ENCODE measurements at regions of chrX and their contacts with region 1.

Region 1: DNA sequence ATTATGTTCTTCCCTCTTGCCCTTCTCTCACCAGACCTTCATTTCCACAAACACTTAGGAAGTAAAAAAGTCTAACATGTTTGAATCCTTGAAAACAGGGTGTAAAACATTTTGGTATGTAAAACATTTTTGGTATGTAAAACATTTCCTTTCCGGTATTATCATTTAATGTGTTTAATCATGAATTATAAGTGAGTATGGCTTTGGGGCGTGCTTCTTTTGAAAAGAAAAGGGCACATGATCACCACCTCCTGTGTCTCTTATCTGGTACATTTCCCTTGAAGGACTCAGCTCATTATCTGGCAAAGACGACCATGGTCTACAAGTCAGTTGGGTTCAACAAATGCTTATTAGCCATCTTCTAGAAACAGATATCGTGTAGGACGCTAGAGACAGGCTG is 283.6 kb downstream of the FRMPD4 start:
- DNase-seq: no peak
- H3K4me3 ChIP-seq: no peak overlapping the region
- H3K27ac ChIP-seq: no peak overlapping the region
- H3K4me1 ChIP-seq: no peaks in the 10 kb centered on the region
- H3K27me3 ChIP-seq: no peaks in the 10 kb centered on the region

Region 2: GRCh38 chrX:12505127-12505526 is 83.2 kb after region 1 on chrX:
- in situ Hi-C with region 1: loop called (anchors 25 kb)
- DNase-seq: no peak
- H3K4me3 ChIP-seq: no peak overlapping the region
- H3K27ac ChIP-seq: no peak overlapping the region
- H3K4me1 ChIP-seq: no peaks in the 10 kb centered on the region
- H3K27me3 ChIP-seq: no peaks in the 10 kb centered on the region

Region 3: GRCh38 chrX:13428055-13428786 is 1006.3 kb after region 1 on chrX:
- in situ Hi-C with region 1: no loop called
- DNase-seq: peak; percentile 70
- H3K4me3 ChIP-seq: no peak overlapping the region
- H3K27ac ChIP-seq: peak overlapping the region; percentile 74
- H3K4me1 ChIP-seq: peaks cover 46% of the 10 kb centered on the region
- H3K27me3 ChIP-seq: no peaks in the 10 kb centered on the region

Measured in GM23248 (cell line).